ENCODE measurements at regions of chr13 and their contacts with region 1.

Region 1: GRCh38 chr13:40682449-40683240 is 16.2 kb upstream of the FOXO1 start:
- DNase-seq: no peak
- ATAC-seq: 0 out of 2 replicates have a peak, but pooled peaks have one; percentile 30
- H3K4me3 ChIP-seq: no peak overlapping the region
- H3K27ac ChIP-seq: no peak overlapping the region
- H3K4me1 ChIP-seq: no peaks in the 10 kb centered on the region
- H3K27me3 ChIP-seq: no peaks in the 10 kb centered on the region
- CTCF ChIP-seq: peak; percentile 30 to 63 (median 53); a peak in 5 of 6 replicates
- POLR2A ChIP-seq: no peak
- RAD21 ChIP-seq: peak; percentile 64

Region 2: GRCh38 chr13:39051157-39051556 is 1631.5 kb before region 1 on chr13:
- CTCF ChIA-PET with region 1: interaction called, 4 read pairs
- POLR2A ChIA-PET with region 1: no interaction called
- RAD21 ChIA-PET with region 1: no interaction called
- intact Hi-C with region 1: loop called (anchors 10 kb)
- DNase-seq: peak; percentile 24
- ATAC-seq: peak; percentile 55
- H3K4me3 ChIP-seq: no peak overlapping the region
- H3K27ac ChIP-seq: no peak overlapping the region
- H3K4me1 ChIP-seq: no peaks in the 10 kb centered on the region
- H3K27me3 ChIP-seq: no peaks in the 10 kb centered on the region
- CTCF ChIP-seq: peak; percentile 26 to 61 (median 32); a peak in 4 of 6 replicates
- POLR2A ChIP-seq: no peak
- RAD21 ChIP-seq: peak; percentile 52

Region 3: GRCh38 chr13:39684531-39685137 is 998.0 kb before region 1 on chr13:
- CTCF ChIA-PET with region 1: interaction called, 7 read pairs
- POLR2A ChIA-PET with region 1: no interaction called
- RAD21 ChIA-PET with region 1: interaction called in 1 of 2 experiments, 7 read pairs
- intact Hi-C with region 1: loop called (anchors 2 kb)
- DNase-seq: peak; percentile 15
- ATAC-seq: peak; percentile 67
- H3K4me3 ChIP-seq: no peak overlapping the region
- H3K27ac ChIP-seq: no peak overlapping the region
- H3K4me1 ChIP-seq: no peaks in the 10 kb centered on the region
- H3K27me3 ChIP-seq: no peaks in the 10 kb centered on the region
- CTCF ChIP-seq: peak in 2 of 3 experiments; percentile 18 to 45; a peak in 2 of 6 replicates
- POLR2A ChIP-seq: no peak
- RAD21 ChIP-seq: peak; percentile 39

Region 4: DNA sequence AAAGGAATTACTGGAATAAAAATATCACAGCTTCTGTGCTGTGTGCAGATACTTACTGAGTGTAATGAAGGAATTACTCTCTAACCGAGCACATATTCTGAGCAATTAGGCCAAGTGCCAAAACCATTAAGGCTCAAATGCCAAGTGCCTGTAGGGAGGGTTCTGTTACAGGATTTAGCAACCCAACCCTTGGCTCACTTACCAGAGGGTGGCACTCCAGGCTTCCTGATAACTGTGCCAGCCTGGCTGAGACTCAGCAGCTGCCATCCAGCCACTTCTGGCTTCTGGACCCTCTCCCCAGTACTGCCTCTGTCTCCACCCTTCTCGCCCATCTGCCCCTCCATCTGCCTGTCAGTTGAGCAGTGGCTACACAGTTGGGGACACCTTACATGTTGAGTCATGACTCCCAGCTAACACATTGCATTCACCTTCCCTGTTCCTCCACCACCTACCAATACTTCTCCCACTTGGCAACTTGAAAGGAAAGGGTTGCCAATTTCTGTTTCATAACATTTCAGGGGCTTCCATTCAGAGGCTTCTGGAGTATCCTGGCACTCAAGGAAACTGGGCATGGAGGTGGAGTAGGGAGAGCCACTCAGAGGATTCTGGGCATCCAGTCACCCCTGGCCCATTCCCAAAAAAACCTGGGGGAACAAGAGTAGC is 916.7 kb before region 1 on chr13:
- CTCF ChIA-PET with region 1: no interaction called
- POLR2A ChIA-PET with region 1: no interaction called
- RAD21 ChIA-PET with region 1: interaction called in 1 of 2 experiments, 3 read pairs
- intact Hi-C with region 1: loop called (anchors 5 kb)
- DNase-seq: no peak
- ATAC-seq: peak; percentile 76
- H3K4me3 ChIP-seq: no peak overlapping the region
- H3K27ac ChIP-seq: no peak overlapping the region
- H3K4me1 ChIP-seq: no peaks in the 10 kb centered on the region
- H3K27me3 ChIP-seq: no peaks in the 10 kb centered on the region
- CTCF ChIP-seq: peak; percentile 22 to 29 (median 25); a peak in 2 of 6 replicates
- POLR2A ChIP-seq: no peak
- RAD21 ChIP-seq: peak; percentile 63

Region 5: GRCh38 chr13:39779337-39780265 is 903.0 kb before region 1 on chr13:
- CTCF ChIA-PET with region 1: interaction called, 8 read pairs
- POLR2A ChIA-PET with region 1: no interaction called
- RAD21 ChIA-PET with region 1: no interaction called
- intact Hi-C with region 1: loop called (anchors 5 kb)
- DNase-seq: no peak
- ATAC-seq: no peak
- H3K4me3 ChIP-seq: no peak overlapping the region
- H3K27ac ChIP-seq: no peak overlapping the region
- H3K4me1 ChIP-seq: peaks cover 0 to 12% of the 10 kb centered on the region in 2 experiments; a peak in 2 of 4 replicates
- H3K27me3 ChIP-seq: no peaks in the 10 kb centered on the region
- CTCF ChIP-seq: no peak
- POLR2A ChIP-seq: no peak
- RAD21 ChIP-seq: no peak

Region 6: DNA sequence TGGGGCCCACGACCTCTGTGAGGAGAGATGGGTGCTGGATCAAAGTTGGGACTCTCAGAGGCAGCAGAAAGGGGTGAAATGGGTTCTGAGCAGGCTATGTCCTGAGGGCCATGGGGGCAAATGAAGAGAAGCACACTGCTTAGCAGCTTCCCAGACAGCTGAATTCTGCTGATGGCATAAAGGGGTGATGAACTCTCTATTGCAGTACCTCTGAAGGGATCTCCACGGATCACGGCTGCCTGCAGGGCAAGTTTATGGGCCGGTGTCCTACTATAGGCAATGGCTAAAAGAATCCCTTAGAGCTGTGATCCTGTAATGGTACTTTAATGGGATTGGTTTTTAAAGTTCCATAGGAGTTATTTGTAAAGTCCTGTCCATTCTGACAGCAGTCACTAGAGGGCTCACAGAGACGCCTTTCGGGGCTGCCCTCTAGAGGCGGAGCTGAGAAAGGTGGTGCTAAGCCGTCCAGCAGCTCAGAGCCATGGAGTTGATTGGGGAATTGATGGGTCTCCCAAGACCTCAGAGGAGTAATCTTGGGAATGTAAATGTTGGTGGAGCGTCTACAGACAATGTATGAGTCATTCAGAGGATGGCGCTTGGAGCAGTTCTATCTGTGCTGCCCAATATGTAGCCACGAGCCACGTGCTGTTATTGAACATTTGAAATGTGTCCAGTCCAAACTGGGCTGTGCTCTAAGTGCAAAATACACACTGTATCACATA is 739.9 kb before region 1 on chr13:
- CTCF ChIA-PET with region 1: interaction called, 25 read pairs
- POLR2A ChIA-PET with region 1: interaction called, 3 read pairs
- RAD21 ChIA-PET with region 1: no interaction called
- intact Hi-C with region 1: loop called (anchors 2 kb)
- DNase-seq: peak; percentile 80
- ATAC-seq: peak; percentile 100
- H3K4me3 ChIP-seq: no peak overlapping the region
- H3K27ac ChIP-seq: no peak overlapping the region
- H3K4me1 ChIP-seq: 0 out of 4 replicates have a peak, but pooled peaks cover 0 to 3% of the 10 kb centered on the region in 2 experiments
- H3K27me3 ChIP-seq: no peaks in the 10 kb centered on the region
- CTCF ChIP-seq: peak; percentile 99
- POLR2A ChIP-seq: no peak
- RAD21 ChIP-seq: peak; percentile 69

Region 7: GRCh38 chr13:40069173-40070044 is 613.2 kb before region 1 on chr13:
- CTCF ChIA-PET with region 1: interaction called, 19 read pairs
- POLR2A ChIA-PET with region 1: no interaction called
- RAD21 ChIA-PET with region 1: interaction called, 3 to 6 read pairs
- intact Hi-C with region 1: loop called (anchors 1 kb)
- DNase-seq: peak; percentile 44
- ATAC-seq: peak; percentile 99
- H3K4me3 ChIP-seq: no peak overlapping the region
- H3K27ac ChIP-seq: no peak overlapping the region
- H3K4me1 ChIP-seq: peaks cover 0 to 5% of the 10 kb centered on the region in 2 experiments; a peak in 2 of 4 replicates
- H3K27me3 ChIP-seq: no peaks in the 10 kb centered on the region
- CTCF ChIP-seq: peak; percentile 46 to 90 (median 90); a peak in 5 of 6 replicates
- POLR2A ChIP-seq: no peak
- RAD21 ChIP-seq: peak; percentile 76

Region 8: DNA sequence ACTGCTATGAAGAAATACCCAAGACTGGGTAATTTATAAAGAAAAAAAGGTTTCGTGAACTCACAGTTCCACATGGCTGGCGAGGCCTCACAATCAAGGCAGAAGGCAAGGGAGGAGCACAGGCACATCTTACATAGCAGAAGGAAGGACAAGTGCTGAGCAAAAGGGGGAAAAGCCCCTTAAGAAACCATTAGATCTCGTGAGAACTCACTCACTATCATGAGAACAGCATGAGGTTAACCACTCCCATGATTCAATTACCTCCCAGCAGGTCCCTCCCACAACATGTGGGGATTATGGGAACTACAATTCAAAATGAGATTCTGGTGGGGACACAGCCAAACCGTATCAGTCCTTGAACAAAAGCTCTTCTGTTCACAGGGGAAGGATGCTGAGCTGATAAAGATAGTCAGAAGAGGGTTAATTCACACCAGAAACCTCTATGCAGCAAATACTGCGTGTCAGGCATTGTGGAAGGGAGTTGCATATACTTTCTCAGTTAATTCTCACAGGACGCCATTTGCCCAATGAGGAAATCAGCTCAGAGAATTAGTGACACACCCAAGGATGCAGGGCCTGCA is 262.4 kb before region 1 on chr13:
- CTCF ChIA-PET with region 1: no interaction called
- POLR2A ChIA-PET with region 1: no interaction called
- RAD21 ChIA-PET with region 1: no interaction called
- intact Hi-C with region 1: no loop called
- DNase-seq: no peak
- ATAC-seq: peak; percentile 46
- H3K4me3 ChIP-seq: no peak overlapping the region
- H3K27ac ChIP-seq: no peak overlapping the region
- H3K4me1 ChIP-seq: no peaks in the 10 kb centered on the region
- H3K27me3 ChIP-seq: no peaks in the 10 kb centered on the region
- CTCF ChIP-seq: no peak
- POLR2A ChIP-seq: no peak
- RAD21 ChIP-seq: no peak

Measured in HCT116 (cell line).